Caco-2 (cell line): ENCODE measurements at regions of chr19 and their contacts with region 1.

Region 1: DNA sequence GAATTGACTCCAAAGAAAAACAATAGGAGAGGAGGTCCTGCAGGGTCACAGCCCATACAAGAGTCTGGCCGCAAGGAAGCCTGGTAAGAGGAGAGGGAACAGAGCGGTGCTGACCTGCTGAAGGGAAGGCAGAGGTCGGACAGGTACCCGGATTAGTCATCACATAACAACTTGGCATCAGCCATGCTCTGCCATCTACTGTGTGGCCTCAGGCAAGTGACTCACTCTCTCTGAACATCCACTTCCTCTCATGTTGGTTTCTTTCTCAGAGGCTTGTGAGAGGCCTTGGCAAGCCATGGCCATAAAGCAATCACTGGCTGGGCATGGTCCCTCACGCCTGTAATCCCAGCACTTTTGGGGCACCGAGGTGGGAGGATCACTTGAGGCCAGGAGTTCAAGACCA is 7.4 kb upstream of the CAPNS1 start:
- DNase-seq: no peak
- H3K4me3 ChIP-seq: no peak overlapping the region
- H3K4me3 Mint-ChIP-seq: no peak overlapping the region
- H3K27ac Mint-ChIP-seq: no peak overlapping the region
- H3K4me1 ChIP-seq: peaks cover 9% of the 10 kb centered on the region
- H3K4me1 Mint-ChIP-seq: peaks cover 22% of the 10 kb centered on the region
- H3K27me3 ChIP-seq: no peaks in the 10 kb centered on the region
- H3K27me3 Mint-ChIP-seq: no peaks in the 10 kb centered on the region
- CTCF ChIP-seq: no peak

Region 2: GRCh38 chr19:36041831-36042230 is 90.7 kb before region 1 on chr19:
- CTCF ChIA-PET with region 1: no interaction called
- POLR2A ChIA-PET with region 1: no interaction called
- intact Hi-C with region 1: no loop called
- DNase-seq: peak; percentile 75 to 81
- H3K4me3 ChIP-seq: no peak overlapping the region
- H3K4me3 Mint-ChIP-seq: peak overlapping the region; percentile 35
- H3K27ac Mint-ChIP-seq: peak overlapping the region; percentile 91
- H3K4me1 ChIP-seq: peaks cover 22% of the 10 kb centered on the region
- H3K4me1 Mint-ChIP-seq: peaks cover 29% of the 10 kb centered on the region
- H3K27me3 ChIP-seq: no peaks in the 10 kb centered on the region
- H3K27me3 Mint-ChIP-seq: no peaks in the 10 kb centered on the region
- CTCF ChIP-seq: no peak

Region 3: DNA sequence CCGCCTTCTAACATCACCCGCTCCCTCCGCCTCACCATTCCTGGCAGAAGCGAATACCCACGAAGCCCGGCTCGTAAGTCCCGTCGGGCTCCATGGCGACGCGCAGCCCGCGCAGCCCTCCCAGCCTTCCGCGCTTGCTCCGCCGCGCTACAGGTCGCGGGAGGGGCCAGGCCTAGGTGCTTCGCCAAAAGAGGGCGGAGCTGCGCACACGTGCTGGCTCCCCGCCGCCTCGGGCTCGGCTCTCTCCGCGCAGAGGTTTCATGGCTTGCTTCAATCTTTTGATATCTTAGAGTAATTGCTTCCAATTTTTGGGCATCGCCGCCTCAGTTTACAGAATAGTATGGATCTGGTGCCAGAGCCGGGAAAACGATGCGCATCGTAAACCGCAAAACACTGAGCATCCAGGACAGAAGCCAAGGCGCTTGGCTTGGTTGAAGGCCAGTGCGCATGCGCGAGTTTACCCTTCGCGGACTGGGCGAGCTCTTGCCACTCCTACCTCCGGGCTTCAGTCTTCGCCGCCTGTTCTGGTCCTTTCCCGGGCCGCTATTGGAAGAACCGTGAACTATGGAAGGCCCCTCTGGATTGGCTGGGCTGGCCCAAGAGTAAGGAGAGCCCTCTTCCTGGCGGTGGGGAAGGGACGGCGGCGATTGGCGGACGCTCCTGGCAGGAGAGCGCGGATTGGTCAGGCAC is 17.6 kb before region 1 on chr19 and contains the start of gene POLR2I:
- CTCF ChIA-PET with region 1: interaction called, 27 read pairs
- POLR2A ChIA-PET with region 1: interaction called, 10 read pairs
- intact Hi-C with region 1: loop called (anchors 1 kb)
- DNase-seq: peak; percentile 100
- H3K4me3 ChIP-seq: peak within 1 kb of the TSS; percentile 92
- H3K4me3 Mint-ChIP-seq: peak within 1 kb of the TSS; percentile 92
- H3K27ac Mint-ChIP-seq: peak within 1 kb of the TSS; percentile 96
- H3K4me1 ChIP-seq: peaks cover 9% of the 10 kb centered on the region; the same call in 1 of the 2 replicates
- H3K4me1 Mint-ChIP-seq: peaks cover 32% of the 10 kb centered on the region
- H3K27me3 ChIP-seq: no peaks in the 10 kb centered on the region
- H3K27me3 Mint-ChIP-seq: no peaks in the 10 kb centered on the region
- CTCF ChIP-seq: no peak
- total RNA-seq, gene POLR2I: 121 and 129 TPM in 2 replicates

Region 4: DNA sequence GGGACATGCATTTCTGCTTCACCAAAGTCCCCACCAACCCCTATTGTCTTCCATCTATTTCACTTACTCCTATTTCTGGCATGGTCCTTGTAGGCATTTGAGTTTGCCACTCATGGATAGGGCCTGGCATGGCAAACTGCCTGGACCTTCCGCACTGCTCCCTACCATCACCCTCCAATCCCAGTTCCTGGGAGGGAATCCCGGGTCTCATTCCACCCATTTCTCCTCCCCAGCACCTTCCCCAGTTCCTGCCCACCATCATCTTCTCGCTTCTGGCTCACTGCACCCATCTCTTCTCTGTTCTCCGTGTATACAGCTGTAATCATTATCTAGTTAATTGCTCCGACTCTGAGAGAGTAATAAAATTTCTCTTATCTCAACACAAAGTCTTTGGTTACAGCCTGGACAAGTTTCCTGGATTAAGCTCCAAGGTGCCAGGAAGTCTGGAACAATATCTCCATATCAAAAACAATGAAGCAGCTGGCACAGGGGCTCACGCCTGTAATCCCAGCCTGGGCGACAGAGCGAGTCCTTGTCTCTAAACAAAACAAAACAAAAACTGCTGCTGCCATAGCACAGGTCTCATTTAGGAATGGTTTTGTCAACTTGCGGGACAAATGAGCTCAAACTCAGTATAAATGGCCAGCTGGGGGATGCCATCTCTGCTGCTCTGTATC is 36.7 kb after region 1 on chr19:
- CTCF ChIA-PET with region 1: interaction called, 24 read pairs
- POLR2A ChIA-PET with region 1: no interaction called
- intact Hi-C with region 1: loop called (anchors 1 kb)
- DNase-seq: no peak
- H3K4me3 ChIP-seq: no peak overlapping the region
- H3K4me3 Mint-ChIP-seq: no peak overlapping the region
- H3K27ac Mint-ChIP-seq: no peak overlapping the region
- H3K4me1 ChIP-seq: peaks cover 4% of the 10 kb centered on the region; the same call in 1 of the 2 replicates
- H3K4me1 Mint-ChIP-seq: peaks cover 7% of the 10 kb centered on the region
- H3K27me3 ChIP-seq: no peaks in the 10 kb centered on the region
- H3K27me3 Mint-ChIP-seq: no peaks in the 10 kb centered on the region
- CTCF ChIP-seq: no peak

Region 5: GRCh38 chr19:36203293-36203692 is 70.8 kb after region 1 on chr19:
- CTCF ChIA-PET with region 1: no interaction called
- POLR2A ChIA-PET with region 1: no interaction called
- intact Hi-C with region 1: no loop called
- DNase-seq: no peak
- H3K4me3 ChIP-seq: no peak overlapping the region
- H3K4me3 Mint-ChIP-seq: no peak overlapping the region
- H3K27ac Mint-ChIP-seq: no peak overlapping the region
- H3K4me1 ChIP-seq: no peaks in the 10 kb centered on the region
- H3K4me1 Mint-ChIP-seq: no peaks in the 10 kb centered on the region
- H3K27me3 ChIP-seq: no peaks in the 10 kb centered on the region
- H3K27me3 Mint-ChIP-seq: no peaks in the 10 kb centered on the region
- CTCF ChIP-seq: no peak